Heart right ventricle (tissue), 16 donors: ENCODE measurements at regions of chr6 and their contacts with region 1.

Region 1: DNA sequence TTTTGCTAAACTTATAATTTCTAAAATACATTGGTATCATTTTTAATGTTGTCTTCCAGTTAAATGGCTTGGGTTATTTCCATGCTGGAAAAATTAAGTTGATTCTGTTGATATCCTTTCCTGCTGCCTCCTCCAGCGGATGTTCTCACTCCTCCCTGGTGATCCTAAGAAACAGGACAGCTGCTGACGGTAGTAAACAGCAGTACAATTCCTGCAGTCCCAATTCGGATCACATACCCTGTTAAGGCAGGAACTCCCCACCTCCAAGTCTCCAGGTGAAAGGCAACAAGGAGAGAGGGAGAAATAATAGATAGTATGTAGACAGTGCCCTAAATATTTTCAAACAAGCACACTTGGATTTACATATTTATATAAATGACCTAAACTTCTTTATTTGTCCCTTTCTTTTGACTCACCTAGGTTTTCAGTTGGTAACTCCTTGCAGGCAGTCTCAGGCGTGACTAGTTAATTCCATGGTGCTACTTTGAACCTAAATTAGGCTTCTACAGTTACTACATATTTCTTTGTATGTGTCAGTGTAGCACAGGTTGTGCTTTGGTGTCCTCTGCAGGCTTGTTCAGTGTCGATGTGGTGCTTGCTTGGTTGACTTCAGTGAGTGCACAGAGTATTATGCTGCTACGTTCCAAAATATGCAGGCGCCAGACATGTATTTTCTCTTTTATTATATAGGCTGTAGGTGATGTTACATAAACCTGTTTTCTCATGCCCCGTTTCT is 126.0 kb downstream of the ADGRB3 start:
- DNase-seq: no peak
- ATAC-seq: peak in 6 of 8 donors; percentile 44 to 88 (median 76)
- H3K4me3 ChIP-seq: peak overlapping the region in 1 of 10 donors; percentile 19
- H3K27ac ChIP-seq: peak overlapping the region in 2 of 10 donors; percentile 23 to 47
- H3K4me1 ChIP-seq: peaks cover 0 to 20% (median 0%) of the 10 kb centered on the region in 9 donors
- H3K27me3 ChIP-seq: no peaks in the 10 kb centered on the region
- CTCF ChIP-seq: peak in 4 of 9 donors; percentile 12 to 52 (median 21)

Region 2: GRCh38 chr6:68728159-68728979 is 32.7 kb before region 1 on chr6:
- intact Hi-C with region 1: loop called in 1 of 10 experiments (anchors 5 kb)
- DNase-seq: no peak
- ATAC-seq: peak in 2 of 8 donors; percentile 25 to 59
- H3K4me3 ChIP-seq: no peak overlapping the region
- H3K27ac ChIP-seq: no peak overlapping the region
- H3K4me1 ChIP-seq: peaks cover 0 to 16% (median 0%) of the 10 kb centered on the region in 9 donors
- H3K27me3 ChIP-seq: no peaks in the 10 kb centered on the region
- CTCF ChIP-seq: no peak

Region 3: DNA sequence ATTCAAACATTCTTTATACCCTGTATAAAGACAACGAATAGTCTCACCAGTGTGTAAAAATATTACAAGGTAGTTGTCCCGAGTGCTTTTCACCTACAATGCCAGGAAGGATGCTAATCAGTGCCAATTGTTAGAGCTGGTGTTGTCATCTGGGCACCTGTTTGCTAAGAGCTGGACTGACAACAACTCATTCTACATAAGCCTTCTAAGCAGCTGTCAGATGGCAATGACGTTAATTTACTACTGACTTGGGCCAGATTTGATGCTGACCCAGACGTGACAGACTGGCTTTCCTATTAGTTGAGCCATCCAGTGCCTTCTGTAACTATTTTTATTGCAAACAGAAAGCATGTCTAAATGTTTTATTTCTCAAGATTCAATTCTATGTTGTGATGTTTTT is 229.2 kb after region 1 on chr6:
- intact Hi-C with region 1: no loop called
- DNase-seq: no peak
- ATAC-seq: peak in 4 of 8 donors; percentile 27 to 95 (median 71)
- H3K4me3 ChIP-seq: no peak overlapping the region
- H3K27ac ChIP-seq: no peak overlapping the region
- H3K4me1 ChIP-seq: no peaks in the 10 kb centered on the region
- H3K27me3 ChIP-seq: no peaks in the 10 kb centered on the region
- CTCF ChIP-seq: no peak